Gastrocnemius medialis (tissue), 4 donors: ENCODE measurements at regions of chr4 and their contacts with region 1.

Region 1: GRCh38 chr4:54064295-54065111 is at the start of gene CHIC2:
- DNase-seq: peak; percentile 90 to 92
- ATAC-seq: peak; percentile 90 to 91
- H3K4me3 ChIP-seq: peak within 1 kb of the TSS; percentile 89 to 98 (median 94)
- H3K27ac ChIP-seq: peak within 1 kb of the TSS; percentile 83 to 94 (median 89)
- H3K4me1 ChIP-seq: peaks cover 45 to 46% of the 10 kb centered on the region in 2 donors
- H3K27me3 ChIP-seq: no peaks in the 10 kb centered on the region
- CTCF ChIP-seq: peak in 1 of 5 experiments; percentile 8
- POLR2A ChIP-seq: peak; percentile 93 to 98
- total RNA-seq, gene CHIC2: 11.9 to 18.6 (median 15.5) TPM

Region 2: DNA sequence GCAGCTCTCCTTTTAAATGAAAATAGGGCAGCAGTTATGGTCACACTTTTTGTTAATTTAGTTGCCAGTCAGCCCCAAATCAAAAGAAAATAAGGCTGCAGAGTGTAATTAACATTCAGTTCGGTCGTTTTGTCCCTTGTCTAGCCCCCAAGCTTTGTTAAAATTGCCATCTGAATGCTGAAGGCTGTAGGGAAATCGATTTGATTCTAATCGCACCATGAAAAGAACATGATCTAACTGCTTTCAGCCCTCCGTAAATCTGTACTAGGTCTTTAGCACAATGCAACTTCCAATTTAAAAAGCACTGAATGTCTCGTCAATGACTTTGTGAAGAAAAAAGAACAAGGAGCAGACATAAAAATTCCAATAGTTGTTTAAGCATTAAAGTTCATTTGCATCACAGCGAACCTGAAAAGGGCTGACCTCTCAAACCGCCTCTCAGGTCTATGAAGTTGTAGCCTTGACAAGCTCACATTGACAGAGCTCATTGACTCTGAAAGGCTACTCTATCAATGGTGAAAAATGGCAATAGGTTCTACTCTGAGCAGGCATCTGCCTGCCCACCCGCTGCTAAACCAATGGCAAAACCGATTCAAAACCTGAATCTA is 49.0 kb before region 1 on chr4:
- in situ Hi-C with region 1: no loop called
- intact Hi-C with region 1: loop called (anchors 5 kb)
- DNase-seq: no peak
- ATAC-seq: no peak
- H3K4me3 ChIP-seq: no peak overlapping the region
- H3K27ac ChIP-seq: no peak overlapping the region
- H3K4me1 ChIP-seq: peaks cover 12 to 14% of the 10 kb centered on the region in 2 donors
- H3K27me3 ChIP-seq: no peaks in the 10 kb centered on the region
- CTCF ChIP-seq: no peak
- POLR2A ChIP-seq: no peak

Region 3: GRCh38 chr4:54085284-54085683 is 20.8 kb after region 1 on chr4:
- in situ Hi-C with region 1: no loop called
- intact Hi-C with region 1: loop called (anchors 2 kb)
- DNase-seq: peak; percentile 79 to 83
- ATAC-seq: peak; percentile 98 to 99
- H3K4me3 ChIP-seq: no peak overlapping the region
- H3K27ac ChIP-seq: peak overlapping the region; percentile 81 to 89 (median 82)
- H3K4me1 ChIP-seq: peaks cover 6 to 10% of the 10 kb centered on the region in 2 donors
- H3K27me3 ChIP-seq: no peaks in the 10 kb centered on the region
- CTCF ChIP-seq: no peak
- POLR2A ChIP-seq: no peak